ENCODE measurements at regions of chr6 and their contacts with region 1.

Region 1: DNA sequence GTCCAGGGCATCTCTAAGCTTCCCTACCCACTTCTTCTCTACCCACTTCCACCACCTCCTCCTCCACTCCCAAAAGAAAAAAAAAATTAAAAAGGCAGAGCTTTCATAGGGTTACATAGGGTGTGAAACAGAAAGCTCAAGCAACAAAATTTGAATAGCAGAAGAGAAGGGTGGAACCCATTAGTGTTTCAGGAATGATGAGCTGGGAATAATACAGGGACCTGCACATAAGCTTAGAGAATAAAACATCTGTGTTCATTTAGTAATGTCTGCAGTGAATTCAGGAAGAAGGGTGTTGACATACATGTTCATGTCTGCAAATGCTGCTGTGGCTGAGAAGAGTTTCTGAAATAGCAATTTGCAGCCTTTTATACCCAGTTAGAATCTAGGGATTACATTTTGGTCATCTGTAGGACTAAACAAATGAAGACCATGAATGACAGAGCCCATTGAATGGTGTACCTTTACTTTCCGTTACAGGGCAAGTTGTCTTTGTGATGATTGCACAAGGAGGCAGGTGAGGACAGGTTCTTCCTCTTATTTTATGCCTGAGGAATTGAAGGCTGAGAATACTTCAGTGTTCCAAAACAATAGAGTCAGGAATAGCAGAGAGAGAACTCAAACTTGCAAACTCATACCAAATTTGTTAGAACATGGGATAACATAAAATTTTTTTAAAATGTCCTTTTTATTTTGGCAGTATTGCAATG is 975.1 kb downstream of the TFAP2A start:
- DNase-seq: no peak
- ATAC-seq: no peak
- H3K4me3 ChIP-seq: no peak overlapping the region
- H3K27ac ChIP-seq: no peak overlapping the region
- H3K4me1 ChIP-seq: no peaks in the 10 kb centered on the region
- H3K27me3 ChIP-seq: no peaks in the 10 kb centered on the region
- CTCF ChIP-seq: no peak

Region 2: GRCh38 chr6:9233686-9234085 is 206.1 kb before region 1 on chr6:
- intact Hi-C with region 1: no loop called
- DNase-seq: no peak
- ATAC-seq: no peak
- H3K4me3 ChIP-seq: no peak overlapping the region
- H3K27ac ChIP-seq: no peak overlapping the region
- H3K4me1 ChIP-seq: no peaks in the 10 kb centered on the region
- H3K27me3 ChIP-seq: no peaks in the 10 kb centered on the region
- CTCF ChIP-seq: no peak

Region 3: GRCh38 chr6:9428421-9429172 is 11.2 kb before region 1 on chr6:
- intact Hi-C with region 1: loop called in 1 of 10 experiments (anchors 1 kb)
- DNase-seq: no peak
- ATAC-seq: no peak
- H3K4me3 ChIP-seq: no peak overlapping the region
- H3K27ac ChIP-seq: no peak overlapping the region
- H3K4me1 ChIP-seq: no peaks in the 10 kb centered on the region
- H3K27me3 ChIP-seq: no peaks in the 10 kb centered on the region
- CTCF ChIP-seq: no peak